ENCODE measurements at regions of chr18 and their contacts with region 1.

Region 1: DNA sequence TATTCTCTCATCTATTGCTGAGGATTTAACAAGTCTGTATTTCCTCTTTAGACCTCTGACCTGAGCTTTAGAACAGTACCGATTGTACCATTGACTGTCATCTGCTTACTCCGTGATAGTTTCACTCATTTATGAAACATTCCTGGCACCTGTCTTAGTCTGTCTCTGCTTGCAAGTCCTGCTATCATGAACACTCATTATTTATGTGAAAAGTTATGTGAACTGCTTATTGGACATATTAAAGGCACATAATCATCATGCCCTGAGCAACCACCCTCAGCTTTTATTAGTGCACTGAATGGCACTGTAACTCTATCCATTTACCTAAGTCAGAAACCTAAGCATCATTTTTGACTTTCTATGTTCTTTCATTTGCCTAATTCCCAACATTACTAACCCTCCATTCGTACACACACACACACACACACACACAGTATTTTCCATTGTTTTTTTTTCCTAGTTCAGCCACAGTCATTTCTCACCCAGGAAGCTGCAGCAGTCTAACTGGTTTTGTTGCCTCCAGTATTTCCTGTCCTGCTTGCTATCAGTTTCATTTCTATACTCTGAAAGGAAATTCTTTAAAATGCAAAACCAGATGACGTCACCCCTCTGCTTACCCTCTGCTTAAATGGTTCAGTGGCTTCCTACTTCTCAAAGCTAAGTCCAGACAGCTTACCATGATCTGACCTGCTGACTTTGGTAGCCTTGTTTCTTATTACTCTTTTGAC is 146.1 kb downstream of the HAUS1 start:
- DNase-seq: peak; percentile 74
- ATAC-seq: peak; percentile 93
- H3K4me3 Mint-ChIP-seq: peak overlapping the region; percentile 50
- H3K27ac Mint-ChIP-seq: peak overlapping the region; percentile 91
- H3K4me1 Mint-ChIP-seq: peaks cover 68% of the 10 kb centered on the region
- H3K27me3 Mint-ChIP-seq: no peaks in the 10 kb centered on the region
- CTCF ChIP-seq: no peak

Region 2: DNA sequence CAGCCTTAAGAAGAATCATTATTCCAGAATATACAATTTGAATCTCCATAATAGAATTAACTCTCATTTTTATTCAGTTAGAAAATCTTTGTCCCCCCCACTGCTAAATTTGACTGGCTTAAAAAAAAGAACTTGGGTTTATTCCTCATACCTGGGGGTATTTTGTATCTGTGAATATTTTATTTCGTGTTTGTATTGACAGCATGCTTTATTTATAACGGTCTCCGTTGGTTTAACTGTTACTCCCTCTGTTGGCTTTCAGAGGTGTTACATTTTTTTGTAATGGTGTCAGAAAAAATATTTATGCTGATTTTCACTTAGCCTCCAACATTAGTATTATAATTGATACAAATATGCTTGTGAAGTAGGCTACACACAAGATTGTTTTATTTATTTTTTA is 37.0 kb before region 1 on chr18:
- CTCF ChIA-PET with region 1: interaction called, 11 read pairs
- POLR2A ChIA-PET with region 1: interaction called, 3 read pairs
- intact Hi-C with region 1: loop called (anchors 5 kb)
- DNase-seq: no peak
- ATAC-seq: no peak
- H3K4me3 Mint-ChIP-seq: no peak overlapping the region
- H3K27ac Mint-ChIP-seq: peak overlapping the region; percentile 75
- H3K4me1 Mint-ChIP-seq: peaks cover 88% of the 10 kb centered on the region
- H3K27me3 Mint-ChIP-seq: no peaks in the 10 kb centered on the region
- CTCF ChIP-seq: peak; percentile 69